Common myeloid progenitor, CD34-positive (primary cell): ENCODE measurements at regions of chr2 and their contacts with region 1.

Region 1: GRCh38 chr2:55771612-55772011 is 78.0 kb upstream of the PNPT1 start:
- DNase-seq: peak in 2 of 3 donors; percentile 3 to 8
- H3K4me3 ChIP-seq: no peak overlapping the region
- H3K27ac ChIP-seq: no peak overlapping the region
- H3K4me1 ChIP-seq: no peaks in the 10 kb centered on the region
- H3K27me3 ChIP-seq: peaks cover 0 to 4% (median 3%) of the 10 kb centered on the region in 5 experiments

Region 2: DNA sequence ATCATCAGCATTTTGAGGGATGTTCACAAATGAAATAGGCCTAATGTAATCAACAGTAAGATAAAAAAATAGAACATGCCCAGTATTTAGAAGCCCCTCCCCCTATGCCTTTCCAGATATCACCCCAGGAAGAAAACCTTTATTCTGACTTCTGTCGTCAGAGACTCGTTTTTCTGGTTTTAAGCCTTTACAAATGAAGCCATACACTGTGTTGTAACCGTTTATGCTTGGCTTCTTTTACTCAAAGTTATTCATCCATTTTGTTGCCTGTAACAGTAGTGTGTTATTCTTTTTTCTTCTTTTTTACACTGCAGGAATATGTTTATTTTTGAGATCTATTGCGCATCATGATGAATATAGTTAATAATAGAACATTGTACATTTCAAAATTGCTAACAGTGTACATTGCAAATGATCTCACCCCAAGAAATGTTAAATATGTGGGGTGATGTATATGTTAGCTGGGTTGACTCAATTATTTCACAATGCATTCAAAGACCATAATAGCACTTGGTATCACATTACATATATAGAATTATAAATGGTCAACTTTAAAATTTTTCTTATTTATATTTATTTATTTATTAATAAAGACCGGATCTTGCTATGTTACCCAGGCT is 49.9 kb before region 1 on chr2:
- CTCF ChIA-PET with region 1: no interaction called
- POLR2A ChIA-PET with region 1: no interaction called
- DNase-seq: no peak
- H3K4me3 ChIP-seq: no peak overlapping the region
- H3K27ac ChIP-seq: no peak overlapping the region
- H3K4me1 ChIP-seq: no peaks in the 10 kb centered on the region
- H3K27me3 ChIP-seq: no peaks in the 10 kb centered on the region

Region 3: DNA sequence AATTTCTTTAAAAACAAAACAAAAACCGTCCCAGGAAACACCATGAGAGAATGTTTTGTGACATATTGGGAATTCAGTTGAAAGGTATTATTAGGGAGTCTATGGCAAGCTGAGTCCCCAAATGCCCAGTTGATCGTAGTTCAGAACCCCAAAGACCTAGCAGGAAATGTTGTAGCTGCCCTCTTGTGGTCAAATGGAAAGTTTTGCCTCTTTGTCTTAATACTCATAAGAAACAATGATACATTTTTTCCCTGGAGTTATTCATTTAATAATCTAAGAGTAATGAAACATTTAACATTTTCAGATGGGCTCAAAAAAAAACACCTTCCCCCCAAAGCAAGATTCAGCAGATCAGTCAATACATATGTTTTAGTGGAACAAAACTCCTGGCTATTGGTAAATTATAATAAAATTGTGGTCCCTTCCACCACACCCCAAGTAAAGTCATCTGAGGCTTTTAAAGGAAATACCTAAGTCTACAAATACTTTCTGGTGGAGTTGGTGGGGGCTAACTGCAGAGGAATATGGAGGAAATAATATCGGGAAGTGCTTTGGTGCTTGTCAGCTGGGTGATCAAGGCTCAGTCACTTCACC is 189.8 kb after region 1 on chr2:
- CTCF ChIA-PET with region 1: interaction called, 10 read pairs
- POLR2A ChIA-PET with region 1: no interaction called
- DNase-seq: peak; percentile 22 to 58 (median 55)
- H3K4me3 ChIP-seq: no peak overlapping the region
- H3K27ac ChIP-seq: no peak overlapping the region
- H3K4me1 ChIP-seq: peaks cover 0 to 5% (median 2%) of the 10 kb centered on the region in 4 experiments
- H3K27me3 ChIP-seq: peaks cover 0 to 5% (median 0%) of the 10 kb centered on the region in 5 experiments